ENCODE measurements at regions of chr1 and their contacts with region 1.

Region 1: GRCh38 chr1:211944733-211945500 is 90.4 kb downstream of the INTS7 start:
- DNase-seq: no peak

Region 2: DNA sequence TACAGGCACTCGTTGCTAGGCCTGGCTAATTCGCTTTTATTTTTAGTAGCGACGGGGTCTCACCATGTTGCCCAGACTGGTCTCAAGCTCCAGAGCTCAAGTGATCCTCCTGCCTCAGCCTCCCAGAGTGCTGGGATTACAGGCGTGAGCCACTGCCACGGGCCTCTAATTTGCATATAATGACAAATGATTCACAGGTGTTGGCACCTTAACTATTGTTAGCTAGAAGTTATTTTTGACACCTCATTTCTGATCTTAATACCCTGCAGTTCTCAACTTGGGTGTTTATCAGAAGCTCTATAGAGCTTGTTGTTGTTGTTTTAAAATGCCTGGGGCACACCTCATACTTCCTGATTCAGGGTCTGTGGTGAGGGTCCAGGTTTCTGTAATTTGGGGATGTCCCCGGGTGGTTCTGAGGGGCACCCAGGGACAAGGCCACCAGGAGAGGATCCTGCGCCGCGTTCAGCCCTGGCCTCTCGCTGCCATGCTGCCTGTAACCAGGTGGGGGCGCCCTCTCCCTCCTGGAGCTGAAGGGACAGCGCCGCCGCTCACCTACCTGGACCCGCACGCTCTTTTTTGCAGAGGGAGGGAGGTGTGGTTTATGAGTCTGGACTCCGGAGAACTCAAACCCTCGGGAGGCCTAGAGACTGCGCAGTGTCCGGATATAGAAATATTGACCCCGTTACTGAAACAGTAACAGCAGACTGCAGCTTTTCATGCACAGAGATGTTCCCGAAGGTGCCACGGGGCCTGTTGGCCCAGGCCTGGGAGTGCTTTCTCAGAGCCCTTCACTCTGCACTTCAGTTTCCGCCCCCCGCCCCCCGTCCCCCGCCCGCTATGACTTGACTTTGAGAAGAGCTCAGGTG is 246.5 kb before region 1 on chr1:
- intact Hi-C with region 1: loop called (anchors 5 kb)
- DNase-seq: peak; percentile 94

Measured in cardiac septum (tissue), 1 donor.